CD4-positive, alpha-beta memory T cell (primary cell): ENCODE measurements at regions of chr18 and their contacts with region 1.

Region 1: DNA sequence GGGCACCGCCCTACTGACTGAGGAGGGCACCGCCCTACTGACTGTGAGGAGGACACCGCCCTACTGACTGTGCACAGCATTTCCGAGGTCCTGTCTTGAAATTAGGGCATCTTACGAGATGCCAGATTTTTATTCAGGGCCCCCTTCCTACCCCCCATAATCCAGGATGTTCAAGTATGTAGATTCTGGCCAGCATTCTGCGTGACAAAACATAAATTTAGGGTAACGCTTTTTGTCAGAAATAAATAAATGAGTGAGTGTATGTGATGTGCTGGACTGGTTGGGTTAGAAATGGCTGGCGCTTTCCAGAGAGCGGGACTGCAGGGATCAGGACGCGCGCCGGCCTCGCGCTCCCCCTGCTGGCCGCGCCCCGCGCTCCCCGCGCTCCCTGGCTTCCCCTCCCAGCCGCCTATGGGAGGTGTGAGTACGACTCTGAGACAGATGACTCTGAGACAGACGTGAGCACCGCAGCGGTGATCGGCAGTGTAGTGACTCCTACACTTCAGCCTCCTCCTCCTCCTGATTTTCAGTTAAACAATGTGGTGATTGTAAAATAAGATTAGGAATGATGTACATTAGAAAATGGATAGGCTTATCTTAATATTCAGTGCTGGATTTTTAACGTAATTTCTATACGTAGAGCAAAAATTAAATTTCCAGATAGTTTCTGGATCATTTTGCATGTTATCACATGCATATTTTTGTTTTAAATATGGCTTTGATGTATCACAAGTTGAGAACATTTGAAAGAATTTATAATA is 149.2 kb upstream of the NFATC1 start:
- DNase-seq: peak; percentile 73 to 86 (median 80)
- H3K4me3 ChIP-seq: peak overlapping the region in 1 of 2 donors; percentile 3
- H3K4me3 Mint-ChIP-seq: peak overlapping the region; percentile 63 to 79 (median 76)
- H3K27ac ChIP-seq: no peak overlapping the region
- H3K27ac Mint-ChIP-seq: peak overlapping the region; percentile 85 to 97 (median 93)
- H3K4me1 ChIP-seq: peaks cover 7% of the 10 kb centered on the region
- H3K4me1 Mint-ChIP-seq: peaks cover 7 to 13% (median 10%) of the 10 kb centered on the region in 4 donors
- H3K27me3 ChIP-seq: no peaks in the 10 kb centered on the region
- H3K27me3 Mint-ChIP-seq: no peaks in the 10 kb centered on the region

Region 2: GRCh38 chr18:77899972-77900754 is 1346.4 kb before region 1 on chr18:
- CTCF ChIA-PET with region 1: no interaction called
- POLR2A ChIA-PET with region 1: no interaction called
- intact Hi-C with region 1: loop called (anchors 5 kb)
- DNase-seq: peak; percentile 43 to 61 (median 54)
- H3K4me3 ChIP-seq: no peak overlapping the region
- H3K4me3 Mint-ChIP-seq: peak overlapping the region in 7 of 8 donors; percentile 35 to 76 (median 52)
- H3K27ac ChIP-seq: no peak overlapping the region
- H3K27ac Mint-ChIP-seq: no peak overlapping the region
- H3K4me1 ChIP-seq: peaks cover 5% of the 10 kb centered on the region
- H3K4me1 Mint-ChIP-seq: peaks cover 0 to 4% (median 2%) of the 10 kb centered on the region in 4 donors
- H3K27me3 ChIP-seq: no peaks in the 10 kb centered on the region
- H3K27me3 Mint-ChIP-seq: peaks cover 0 to 10% of the 10 kb centered on the region in 2 donors

Region 3: DNA sequence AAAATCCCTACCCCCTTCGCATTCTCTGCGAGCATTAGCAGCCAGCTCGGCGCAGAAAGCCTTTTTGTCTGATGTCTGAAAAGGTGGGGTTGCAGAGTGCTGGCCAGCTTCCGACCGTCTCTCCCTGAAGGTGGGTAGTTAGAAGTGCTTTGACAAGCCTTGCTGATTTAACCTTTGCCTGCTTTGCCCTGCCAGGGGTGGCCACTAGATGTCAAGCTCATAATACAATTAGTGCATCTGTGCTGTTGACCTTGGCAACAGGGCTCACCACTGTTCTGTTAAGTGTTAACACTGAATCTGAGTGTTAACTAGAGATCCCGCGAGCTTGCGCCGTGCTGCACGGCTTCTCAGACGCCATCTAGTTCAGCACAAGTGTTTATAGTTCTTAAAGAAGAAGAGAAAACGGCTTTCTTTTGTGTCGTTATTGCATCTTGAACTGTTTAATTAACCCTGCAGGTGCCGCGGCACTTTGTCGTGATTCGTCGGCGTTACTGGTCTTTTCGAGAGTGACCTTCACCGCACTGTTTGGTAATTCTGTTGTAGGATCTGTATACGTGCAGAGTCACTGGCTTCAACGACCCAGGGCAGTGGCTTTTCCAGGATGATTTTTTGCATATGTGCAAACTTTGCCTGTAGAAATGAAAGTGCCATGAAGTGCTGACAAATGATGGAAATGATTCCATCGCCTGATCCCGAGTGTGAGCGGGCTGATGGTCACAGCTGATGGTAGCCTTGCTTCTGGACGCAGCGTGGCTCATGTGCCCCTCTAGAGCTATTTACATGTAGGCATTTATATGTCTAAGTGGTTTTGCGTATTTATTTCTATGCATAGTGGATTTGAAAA is 261.4 kb before region 1 on chr18:
- CTCF ChIA-PET with region 1: interaction called, 3 read pairs
- POLR2A ChIA-PET with region 1: no interaction called
- intact Hi-C with region 1: loop called (anchors 5 kb)
- DNase-seq: no peak
- H3K4me3 ChIP-seq: no peak overlapping the region
- H3K4me3 Mint-ChIP-seq: peak overlapping the region in 1 of 8 donors; percentile 42
- H3K27ac ChIP-seq: no peak overlapping the region
- H3K27ac Mint-ChIP-seq: peak overlapping the region in 1 of 7 donors; percentile 60
- H3K4me1 ChIP-seq: no peaks in the 10 kb centered on the region
- H3K4me1 Mint-ChIP-seq: peaks cover 5 to 8% (median 6%) of the 10 kb centered on the region in 4 donors
- H3K27me3 ChIP-seq: peaks cover 27% of the 10 kb centered on the region
- H3K27me3 Mint-ChIP-seq: peaks cover 53 to 55% of the 10 kb centered on the region in 2 donors

Region 4: GRCh38 chr18:79068937-79069791 is 177.4 kb before region 1 on chr18 and contains the start of gene ATP9B:
- CTCF ChIA-PET with region 1: no interaction called
- POLR2A ChIA-PET with region 1: no interaction called
- intact Hi-C with region 1: loop called (anchors 2 kb)
- DNase-seq: peak; percentile 97 to 100 (median 99)
- H3K4me3 ChIP-seq: peak within 1 kb of the TSS; percentile 65 to 69
- H3K4me3 Mint-ChIP-seq: peak within 1 kb of the TSS; percentile 90 to 100 (median 95)
- H3K27ac ChIP-seq: peak within 1 kb of the TSS; percentile 98
- H3K27ac Mint-ChIP-seq: peak within 1 kb of the TSS; percentile 99 to 100 (median 99)
- H3K4me1 ChIP-seq: peaks cover 36% of the 10 kb centered on the region
- H3K4me1 Mint-ChIP-seq: peaks cover 28 to 66% (median 43%) of the 10 kb centered on the region in 4 donors
- H3K27me3 ChIP-seq: no peaks in the 10 kb centered on the region
- H3K27me3 Mint-ChIP-seq: peaks cover 0 to 5% of the 10 kb centered on the region in 2 donors
- total RNA-seq, gene ATP9B: 73.2 to 76.4 TPM

Region 5: GRCh38 chr18:79384151-79384807 is 137.8 kb after region 1 on chr18:
- CTCF ChIA-PET with region 1: no interaction called
- POLR2A ChIA-PET with region 1: no interaction called
- intact Hi-C with region 1: no loop called
- DNase-seq: no peak
- H3K4me3 ChIP-seq: no peak overlapping the region
- H3K4me3 Mint-ChIP-seq: no peak overlapping the region
- H3K27ac ChIP-seq: no peak overlapping the region
- H3K27ac Mint-ChIP-seq: peak overlapping the region in 1 of 7 donors; percentile 31
- H3K4me1 ChIP-seq: peaks cover 1% of the 10 kb centered on the region
- H3K4me1 Mint-ChIP-seq: peaks cover 3 to 8% (median 6%) of the 10 kb centered on the region in 4 donors
- H3K27me3 ChIP-seq: no peaks in the 10 kb centered on the region
- H3K27me3 Mint-ChIP-seq: peaks cover 0 to 1% of the 10 kb centered on the region in 2 donors